ENCODE measurements at regions of chr12 and their contacts with region 1.

Region 1: DNA sequence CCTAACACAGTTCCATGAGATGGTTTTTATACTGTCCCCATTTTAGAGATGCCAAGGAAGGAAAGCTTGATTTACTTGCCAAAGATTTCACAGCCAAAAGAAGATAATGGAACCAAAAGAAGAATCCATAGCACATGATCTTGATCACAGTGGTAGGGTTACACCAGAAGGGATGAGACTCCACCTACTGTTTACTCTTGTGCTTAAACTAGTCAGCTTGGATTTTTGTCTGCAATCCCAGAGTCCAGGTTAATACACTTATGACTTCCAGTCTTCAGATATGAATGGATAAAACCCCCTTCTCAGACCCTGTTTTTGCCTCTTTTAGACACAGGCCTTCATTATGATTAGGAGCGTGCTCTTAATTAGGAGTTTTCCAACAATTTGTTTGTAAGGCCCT is 454.2 kb downstream of the AEBP2 start:
- DNase-seq: no peak
- ATAC-seq: peak; percentile 42
- H3K4me3 ChIP-seq: no peak overlapping the region
- H3K27ac ChIP-seq: no peak overlapping the region
- H3K4me1 ChIP-seq: no peaks in the 10 kb centered on the region
- H3K27me3 ChIP-seq: no peaks in the 10 kb centered on the region
- CTCF ChIP-seq: peak in 1 of 3 experiments; percentile 41; a peak in 2 of 6 replicates
- EP300 ChIP-seq: no peak
- POLR2A ChIP-seq: no peak
- RAD21 ChIP-seq: peak; percentile 51

Region 2: GRCh38 chr12:19474147-19474546 is 419.4 kb before region 1 on chr12:
- CTCF ChIA-PET with region 1: no interaction called
- POLR2A ChIA-PET with region 1: no interaction called
- RAD21 ChIA-PET with region 1: no interaction called
- SMC1A ChIA-PET with region 1: no interaction called
- in situ Hi-C with region 1: no loop called
- intact Hi-C with region 1: loop called (anchors 10 kb)
- DNase-seq: no peak
- ATAC-seq: no peak
- H3K4me3 ChIP-seq: no peak overlapping the region
- H3K27ac ChIP-seq: no peak overlapping the region
- H3K4me1 ChIP-seq: no peaks in the 10 kb centered on the region
- H3K27me3 ChIP-seq: no peaks in the 10 kb centered on the region
- CTCF ChIP-seq: no peak
- EP300 ChIP-seq: no peak
- POLR2A ChIP-seq: no peak
- RAD21 ChIP-seq: no peak

Region 3: GRCh38 chr12:19744734-19745218 is 148.7 kb before region 1 on chr12:
- CTCF ChIA-PET with region 1: interaction called, 41 read pairs
- POLR2A ChIA-PET with region 1: no interaction called
- RAD21 ChIA-PET with region 1: interaction called, 26 read pairs
- SMC1A ChIA-PET with region 1: interaction called, 25 read pairs
- in situ Hi-C with region 1: no loop called
- intact Hi-C with region 1: loop called (anchors 5 kb)
- DNase-seq: no peak
- ATAC-seq: no peak
- H3K4me3 ChIP-seq: no peak overlapping the region
- H3K27ac ChIP-seq: no peak overlapping the region
- H3K4me1 ChIP-seq: no peaks in the 10 kb centered on the region
- H3K27me3 ChIP-seq: no peaks in the 10 kb centered on the region
- CTCF ChIP-seq: no peak
- EP300 ChIP-seq: no peak
- POLR2A ChIP-seq: no peak
- RAD21 ChIP-seq: no peak

Region 4: GRCh38 chr12:19779393-19780056 is 114.0 kb before region 1 on chr12:
- CTCF ChIA-PET with region 1: interaction called, 8 read pairs
- POLR2A ChIA-PET with region 1: no interaction called
- RAD21 ChIA-PET with region 1: interaction called, 12 read pairs
- SMC1A ChIA-PET with region 1: interaction called, 10 read pairs
- in situ Hi-C with region 1: no loop called
- intact Hi-C with region 1: no loop called
- DNase-seq: no peak
- ATAC-seq: no peak; the same call in 1 of the 3 replicates
- H3K4me3 ChIP-seq: no peak overlapping the region
- H3K27ac ChIP-seq: no peak overlapping the region
- H3K4me1 ChIP-seq: no peaks in the 10 kb centered on the region
- H3K27me3 ChIP-seq: no peaks in the 10 kb centered on the region
- CTCF ChIP-seq: no peak
- EP300 ChIP-seq: no peak
- POLR2A ChIP-seq: no peak
- RAD21 ChIP-seq: no peak

Region 5: DNA sequence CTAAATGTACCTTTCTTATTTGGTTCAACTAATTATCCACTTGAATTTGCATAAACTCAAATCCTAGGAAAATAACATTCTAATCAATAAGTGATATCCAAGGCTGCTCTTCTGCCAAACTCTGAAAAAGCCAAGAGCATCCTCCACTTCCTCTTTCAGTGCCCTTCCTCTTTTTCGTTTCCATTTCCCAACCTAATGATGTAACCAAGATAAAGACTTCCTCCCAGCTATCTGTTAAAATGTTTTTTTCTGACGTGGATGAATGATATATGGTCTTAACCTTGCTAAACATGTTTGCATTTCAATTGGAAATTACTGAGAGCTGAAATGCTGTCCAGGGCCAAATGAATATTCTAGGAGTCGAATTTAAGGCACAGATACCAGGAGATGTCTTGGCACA is 15.3 kb after region 1 on chr12:
- CTCF ChIA-PET with region 1: interaction called, 48 read pairs
- POLR2A ChIA-PET with region 1: interaction called, 4 read pairs
- RAD21 ChIA-PET with region 1: interaction called, 26 read pairs
- SMC1A ChIA-PET with region 1: interaction called, 44 read pairs
- in situ Hi-C with region 1: no loop called
- intact Hi-C with region 1: no loop called
- DNase-seq: no peak
- ATAC-seq: peak; percentile 58
- H3K4me3 ChIP-seq: no peak overlapping the region
- H3K27ac ChIP-seq: no peak overlapping the region
- H3K4me1 ChIP-seq: no peaks in the 10 kb centered on the region
- H3K27me3 ChIP-seq: no peaks in the 10 kb centered on the region
- CTCF ChIP-seq: no peak
- EP300 ChIP-seq: no peak
- POLR2A ChIP-seq: no peak
- RAD21 ChIP-seq: no peak

Measured in GM12878 (cell line).